ENCODE measurements at regions of chr17 and their contacts with region 1.

Region 1: DNA sequence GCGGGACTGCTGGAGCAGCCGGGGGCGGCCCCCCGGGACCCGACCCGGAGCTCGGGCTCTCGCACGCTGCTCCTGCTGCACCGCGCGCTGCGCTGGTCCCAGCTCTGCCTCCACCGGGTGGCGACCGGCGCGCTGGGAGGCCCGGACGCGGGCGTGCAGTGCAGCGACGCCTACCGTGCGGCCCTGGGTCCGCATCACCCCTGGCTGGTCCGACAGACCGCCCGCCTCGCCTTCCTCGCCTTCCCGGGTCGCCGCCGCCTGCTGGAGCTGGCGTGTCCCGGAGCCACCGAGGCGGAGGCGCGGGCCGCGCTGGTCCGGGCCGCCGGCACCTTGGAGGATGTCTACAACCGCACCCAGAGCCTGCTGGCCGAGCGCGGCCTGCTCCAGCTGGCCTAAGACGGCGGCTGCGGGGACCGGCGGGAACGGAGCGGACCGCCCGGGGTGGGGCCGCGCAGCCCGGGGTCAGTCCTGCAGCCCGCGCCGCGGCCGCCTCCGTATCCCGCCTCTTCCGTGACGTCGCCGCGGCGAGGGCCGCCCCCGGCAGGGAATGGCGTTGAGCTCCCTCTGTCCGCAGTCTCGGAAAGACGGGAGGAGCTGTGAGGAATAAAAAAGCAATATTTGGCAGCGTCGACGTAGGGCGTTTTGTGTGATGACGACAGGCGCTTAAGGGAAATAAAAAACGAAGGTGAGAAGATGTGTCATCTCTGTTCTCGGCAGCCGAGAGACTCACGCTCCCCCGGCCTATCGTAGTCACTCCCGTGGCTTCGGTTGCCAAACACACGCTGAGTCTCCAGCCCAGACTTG is 1.3 kb downstream of the GLTPD2 start:
- DNase-seq: peak; percentile 85 to 87
- ATAC-seq: peak; percentile 93 to 97 (median 95)
- H3K4me3 ChIP-seq: peak overlapping the region; percentile 19 to 91 (median 74)
- H3K27ac ChIP-seq: peak overlapping the region; percentile 92 to 99 (median 97)
- H3K4me1 ChIP-seq: peaks cover 16 to 47% (median 43%) of the 10 kb centered on the region in 9 donors
- H3K27me3 ChIP-seq: peaks cover 0 to 39% (median 8%) of the 10 kb centered on the region in 7 donors
- CTCF ChIP-seq: peak; percentile 59 to 87 (median 81)

Region 2: DNA sequence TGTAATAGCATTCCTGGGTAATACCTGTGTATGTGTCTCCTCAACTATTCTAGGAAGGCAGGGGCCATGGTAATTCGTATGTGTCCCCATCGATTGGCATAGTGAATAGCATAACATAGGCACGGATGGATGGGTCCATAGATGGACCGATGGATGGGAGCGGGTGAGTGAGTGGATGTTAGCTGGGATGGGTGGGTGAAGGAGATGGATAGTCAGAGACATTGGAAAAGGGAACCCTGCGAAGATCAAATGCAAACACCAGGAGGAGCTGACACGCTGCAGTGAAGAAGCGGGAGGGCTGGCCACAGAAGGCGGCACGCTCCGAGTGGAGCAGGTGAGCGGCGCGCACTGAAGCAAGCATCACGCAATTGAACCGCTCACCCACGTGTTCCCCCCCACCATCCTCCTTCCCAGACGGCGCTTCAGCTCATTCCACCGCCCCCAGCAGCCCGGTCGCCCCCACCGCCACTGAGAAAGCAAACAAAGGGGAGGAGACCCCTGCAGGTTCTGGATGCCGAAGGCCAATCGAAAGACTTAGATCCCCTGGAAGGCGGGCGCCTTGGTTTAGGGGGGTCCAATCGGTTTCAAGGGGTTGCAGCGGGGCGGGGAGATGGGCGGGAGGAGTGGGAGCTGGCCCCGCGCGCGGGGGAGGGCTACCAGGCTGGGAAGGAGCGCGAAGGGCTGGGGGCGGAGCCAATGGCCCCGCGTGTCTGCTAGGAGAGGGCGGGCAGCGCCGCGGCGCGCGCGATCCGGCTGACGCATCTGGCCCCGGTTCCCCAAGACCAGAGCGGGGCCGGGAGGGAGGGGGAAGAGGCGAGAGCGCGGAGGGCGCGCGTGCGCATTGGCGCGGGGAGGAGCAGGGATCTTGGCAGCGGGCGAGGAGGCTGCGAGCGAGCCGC is 80.1 kb before region 1 on chr17 and contains the start of gene ARRB2:
- intact Hi-C with region 1: loop called in 2 of 10 experiments (anchors 5 kb)
- DNase-seq: peak; percentile 97 to 99
- ATAC-seq: peak; percentile 94 to 97 (median 95)
- H3K4me3 ChIP-seq: peak within 1 kb of the TSS; percentile 12 to 85 (median 72)
- H3K27ac ChIP-seq: peak within 1 kb of the TSS in 9 of 10 donors; percentile 53 to 99 (median 80)
- H3K4me1 ChIP-seq: peaks cover 4 to 47% (median 13%) of the 10 kb centered on the region in 9 donors
- H3K27me3 ChIP-seq: no peaks in the 10 kb centered on the region
- CTCF ChIP-seq: peak; percentile 41 to 79 (median 57)
- total RNA-seq, gene ARRB2: 10.8 to 53.5 (median 17.2) TPM

Region 3: GRCh38 chr17:4733073-4733531 is 57.0 kb before region 1 on chr17:
- intact Hi-C with region 1: loop called in 8 of 10 experiments (anchors 5 to 10 kb)
- DNase-seq: no peak
- ATAC-seq: no peak
- H3K4me3 ChIP-seq: no peak overlapping the region
- H3K27ac ChIP-seq: peak overlapping the region in 5 of 10 donors; percentile 15 to 90 (median 39)
- H3K4me1 ChIP-seq: peaks cover 3 to 66% (median 15%) of the 10 kb centered on the region in 9 donors
- H3K27me3 ChIP-seq: peaks cover 0 to 10% (median 0%) of the 10 kb centered on the region in 7 donors
- CTCF ChIP-seq: peak in 2 of 9 donors; percentile 28 to 35

Region 4: DNA sequence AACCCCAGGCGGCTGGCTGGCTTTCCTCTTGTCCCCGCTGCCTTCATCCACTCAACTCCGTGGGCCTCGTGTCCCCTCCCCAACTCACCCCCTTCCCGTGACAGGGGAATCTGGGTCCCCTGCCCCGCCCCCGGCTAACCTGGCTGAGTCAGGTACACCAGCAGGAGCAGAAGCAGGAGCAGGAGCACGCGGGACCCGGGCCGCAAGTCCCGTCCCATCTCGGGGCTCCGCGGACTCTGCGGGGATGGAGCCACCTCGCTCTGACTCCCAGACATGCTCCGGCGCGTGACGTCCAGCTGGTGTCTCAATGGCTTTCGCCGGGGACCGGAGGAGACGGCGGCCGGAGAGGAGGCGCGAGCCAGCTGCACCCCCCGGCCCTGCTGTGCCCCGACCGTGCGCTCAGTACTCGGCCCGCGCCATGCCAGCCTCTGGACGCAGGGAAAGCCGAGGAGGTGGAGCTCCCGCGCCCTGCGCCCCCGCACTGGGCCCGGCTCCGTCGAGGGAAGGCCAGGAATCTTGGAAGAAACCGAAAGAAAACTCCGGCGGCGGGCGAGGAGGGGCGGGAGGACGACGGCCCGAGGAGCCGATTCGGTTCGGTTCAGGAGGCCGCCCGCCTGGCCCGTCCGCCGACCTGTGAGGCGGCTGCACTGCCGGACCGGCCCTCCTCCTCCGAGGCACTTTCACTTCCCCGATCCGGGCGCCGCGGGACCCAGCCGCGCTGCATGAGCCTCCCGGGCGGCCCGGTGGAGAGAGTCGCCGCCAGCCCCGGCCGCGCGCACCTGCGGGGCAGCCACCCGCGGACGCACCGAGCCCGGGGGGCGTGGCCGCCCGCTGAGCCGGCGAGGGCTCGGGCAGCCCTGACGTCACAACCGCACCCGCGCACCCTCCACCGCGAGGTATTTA is 50.7 kb before region 1 on chr17 and contains the starts of genes CXCL16 and ZMYND15:
- intact Hi-C with region 1: loop called in 8 of 10 experiments (anchors 5 to 10 kb)
- DNase-seq: peak; percentile 52 to 58
- ATAC-seq: peak; percentile 52 to 76 (median 66)
- H3K4me3 ChIP-seq: peak within 1 kb of the TSS; percentile 50 to 95 (median 84)
- H3K27ac ChIP-seq: peak within 1 kb of the TSS in 8 of 10 donors; percentile 1 to 82 (median 71)
- H3K4me1 ChIP-seq: peaks cover 2 to 48% (median 13%) of the 10 kb centered on the region in 9 donors
- H3K27me3 ChIP-seq: peaks cover 0 to 41% (median 8%) of the 10 kb centered on the region in 7 donors
- CTCF ChIP-seq: no peak
- total RNA-seq, gene CXCL16: 2.8 to 29.6 (median 4.2) TPM
- total RNA-seq, gene ZMYND15: 0.15 to 2.1 (median 0.38) TPM in 9 of 10 donors, not detected in the other

Region 5: GRCh38 chr17:4833178-4833940 is 43.3 kb after region 1 on chr17 and contains the start of gene MINK1:
- intact Hi-C with region 1: loop called in 4 of 10 experiments (anchors 2 to 5 kb)
- DNase-seq: peak; percentile 85 to 93
- ATAC-seq: peak; percentile 96 to 98 (median 97)
- H3K4me3 ChIP-seq: peak within 1 kb of the TSS; percentile 67 to 99 (median 90)
- H3K27ac ChIP-seq: peak within 1 kb of the TSS; percentile 64 to 97 (median 92)
- H3K4me1 ChIP-seq: peaks cover 10 to 49% (median 46%) of the 10 kb centered on the region in 9 donors
- H3K27me3 ChIP-seq: no peaks in the 10 kb centered on the region
- CTCF ChIP-seq: no peak
- total RNA-seq, gene MINK1: 26.4 to 54.1 (median 33.5) TPM

Region 6: GRCh38 chr17:4903051-4903818 is 113.1 kb after region 1 on chr17 and contains the start of gene CHRNE:
- intact Hi-C with region 1: loop called in 1 of 10 experiments (anchors 5 kb)
- DNase-seq: peak in 1 of 2 donors; percentile 81
- ATAC-seq: peak in 3 of 8 donors; percentile 29 to 40 (median 37)
- H3K4me3 ChIP-seq: peak within 1 kb of the TSS in 4 of 10 donors; percentile 13 to 53 (median 20)
- H3K27ac ChIP-seq: peak within 1 kb of the TSS in 9 of 10 donors; percentile 25 to 71 (median 59)
- H3K4me1 ChIP-seq: peaks cover 0 to 49% (median 34%) of the 10 kb centered on the region in 9 donors
- H3K27me3 ChIP-seq: peaks cover 0 to 36% (median 21%) of the 10 kb centered on the region in 7 donors
- CTCF ChIP-seq: peak; percentile 50 to 88 (median 77)
- total RNA-seq, gene CHRNE: 0.19 to 1.6 (median 0.53) TPM

Region 7: DNA sequence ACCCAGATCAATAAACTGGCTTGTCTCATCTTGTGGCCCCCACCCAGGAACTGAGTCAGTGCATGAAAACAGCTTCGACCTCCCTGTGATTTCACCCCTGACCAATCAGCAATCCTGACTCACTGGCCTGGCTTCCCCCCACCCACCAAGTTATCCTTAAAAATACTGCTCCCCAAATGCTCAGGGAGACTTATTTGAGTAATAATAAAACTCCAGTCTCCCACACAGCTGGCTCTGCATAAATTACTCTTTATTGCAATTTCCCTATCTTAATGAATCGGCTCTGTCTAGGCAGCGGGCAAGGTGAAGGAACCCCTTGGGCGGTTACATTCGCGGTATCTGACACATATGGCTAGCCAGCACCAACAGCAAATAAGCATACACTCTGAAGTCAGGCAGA is 482.2 kb after region 1 on chr17:
- intact Hi-C with region 1: no loop called
- DNase-seq: no peak
- ATAC-seq: no peak
- H3K4me3 ChIP-seq: no peak overlapping the region
- H3K27ac ChIP-seq: no peak overlapping the region
- H3K4me1 ChIP-seq: no peaks in the 10 kb centered on the region
- H3K27me3 ChIP-seq: no peaks in the 10 kb centered on the region
- CTCF ChIP-seq: no peak

Measured in heart right ventricle (tissue), 16 donors.